Gastrocnemius medialis (tissue), 4 donors: ENCODE measurements at regions of chrX and their contacts with region 1.

Region 1: DNA sequence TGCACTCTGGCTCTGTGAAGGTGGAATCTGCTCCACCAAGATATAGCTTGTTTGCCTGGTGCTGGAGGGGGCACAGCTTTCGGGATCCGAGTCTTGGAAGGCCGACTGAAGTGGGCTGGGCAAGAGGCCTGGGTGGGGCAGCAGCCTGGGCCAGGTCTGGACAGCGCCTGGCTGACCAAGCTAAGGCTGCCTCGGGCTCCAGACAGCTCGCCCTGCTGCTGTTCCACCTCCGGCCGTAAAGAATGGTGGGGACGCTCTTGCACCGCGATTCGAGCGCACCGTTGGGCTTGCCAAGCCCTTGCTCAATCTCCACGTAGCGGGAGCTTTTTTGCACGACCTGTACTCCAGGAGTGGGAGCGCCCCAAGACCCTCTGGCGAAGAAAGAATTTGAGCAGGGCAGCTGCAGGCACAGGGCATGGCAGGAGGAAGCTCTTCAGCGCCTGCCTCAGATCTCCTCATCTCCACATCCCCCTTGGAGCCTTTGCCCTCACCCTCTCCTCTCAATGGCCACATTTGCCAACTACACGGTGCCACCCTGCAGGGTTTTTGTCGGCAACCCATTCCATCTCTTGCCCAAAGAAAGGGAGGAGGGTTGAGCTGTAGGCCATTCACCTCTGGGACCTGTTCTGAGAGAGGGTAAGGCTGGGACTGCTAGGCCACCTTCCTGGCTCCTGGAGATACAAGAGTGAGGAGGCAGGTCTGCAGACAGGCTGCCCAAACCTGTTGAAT is 18.9 kb downstream of the CNGA2 start:
- DNase-seq: peak; percentile 4 to 19
- ATAC-seq: peak; percentile 58 to 72
- H3K4me3 ChIP-seq: no peak overlapping the region
- H3K27ac ChIP-seq: no peak overlapping the region
- H3K4me1 ChIP-seq: no peaks in the 10 kb centered on the region
- H3K27me3 ChIP-seq: no peaks in the 10 kb centered on the region
- CTCF ChIP-seq: peak; percentile 37 to 71 (median 59)
- POLR2A ChIP-seq: no peak

Region 2: GRCh38 chrX:151694661-151695582 is 58.6 kb before region 1 on chrX and contains the start of gene PRRG3:
- in situ Hi-C with region 1: no loop called
- intact Hi-C with region 1: no loop called
- DNase-seq: no peak
- ATAC-seq: no peak
- H3K4me3 ChIP-seq: peak within 1 kb of the TSS; percentile 5 to 40 (median 22)
- H3K27ac ChIP-seq: no peak within 1 kb of the TSS
- H3K4me1 ChIP-seq: no peaks in the 10 kb centered on the region
- H3K27me3 ChIP-seq: peaks cover 0 to 8% (median 0%) of the 10 kb centered on the region in 3 donors
- CTCF ChIP-seq: no peak
- POLR2A ChIP-seq: no peak
- total RNA-seq, gene PRRG3: 0.04 to 0.39 TPM in 2 of 4 donors, not detected in the others

Region 3: DNA sequence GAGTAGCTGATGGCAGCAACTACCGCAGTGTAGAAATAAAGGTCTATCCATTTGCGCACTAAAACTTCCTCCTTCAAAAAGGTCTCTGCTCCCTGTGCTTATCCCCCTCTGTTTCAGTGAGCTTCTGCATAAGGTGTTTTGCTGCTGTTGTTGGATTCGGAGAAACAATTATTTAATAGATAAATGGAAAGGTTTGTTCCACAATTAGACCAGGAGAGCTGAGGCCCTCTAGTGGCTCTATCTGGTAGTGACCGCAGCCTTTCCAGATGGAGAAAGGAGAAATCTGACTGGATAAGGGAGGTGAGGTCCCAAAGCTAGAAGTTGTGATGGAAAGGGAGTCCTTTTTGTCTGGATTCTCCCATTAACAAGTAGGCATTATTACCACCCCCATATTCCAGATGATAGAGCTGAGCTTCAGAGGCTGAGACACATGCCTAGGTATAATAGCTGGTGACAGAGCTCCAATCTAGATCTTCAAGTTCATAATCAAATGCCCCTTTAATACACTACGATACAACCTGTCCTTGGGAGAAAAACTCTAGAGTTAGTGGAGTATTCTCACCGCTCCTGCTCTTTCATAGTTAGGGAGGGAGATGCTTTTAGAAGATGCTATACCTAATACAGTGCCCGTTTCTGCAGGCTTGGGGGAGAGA is 879.1 kb after region 1 on chrX:
- in situ Hi-C with region 1: loop called (anchors 10 to 25 kb)
- intact Hi-C with region 1: loop called (anchors 5 kb)
- DNase-seq: no peak
- ATAC-seq: no peak
- H3K4me3 ChIP-seq: no peak overlapping the region
- H3K27ac ChIP-seq: no peak overlapping the region
- H3K4me1 ChIP-seq: no peaks in the 10 kb centered on the region
- H3K27me3 ChIP-seq: peaks cover 0 to 5% (median 0%) of the 10 kb centered on the region in 3 donors
- CTCF ChIP-seq: peak in 4 of 5 experiments; percentile 37 to 60 (median 44)
- POLR2A ChIP-seq: no peak

Region 4: DNA sequence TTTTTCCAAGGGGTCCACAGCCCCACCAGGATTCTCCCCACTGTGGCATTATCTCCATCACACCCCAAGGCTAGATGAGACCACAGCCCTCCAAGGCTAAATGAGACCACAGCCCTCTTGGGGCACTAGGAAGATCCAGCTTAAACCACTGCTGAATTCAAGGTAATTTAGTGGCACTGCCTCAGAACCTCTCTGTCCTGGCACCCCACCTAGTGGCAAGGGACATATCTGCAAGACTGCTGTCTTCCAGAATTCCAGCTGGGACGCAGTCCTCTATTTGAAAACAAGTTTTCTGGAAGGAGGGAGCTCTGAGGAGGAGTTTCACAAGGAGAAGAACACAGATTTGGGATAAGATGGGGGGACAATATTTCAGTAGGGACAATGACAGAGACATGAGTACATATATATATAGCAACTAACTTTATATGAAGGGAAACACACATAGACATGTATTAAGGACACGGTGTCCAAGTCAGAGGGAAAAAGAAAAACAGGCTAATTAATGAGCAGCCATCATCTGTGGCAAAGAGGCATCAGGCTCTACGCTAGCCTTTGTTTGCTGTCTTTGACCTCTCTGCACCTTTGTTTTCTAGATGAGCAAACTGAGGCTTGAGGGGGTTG is 1067.8 kb after region 1 on chrX:
- in situ Hi-C with region 1: loop called in 1 of 4 experiments (anchors 25 kb)
- intact Hi-C with region 1: loop called (anchors 10 kb)
- DNase-seq: no peak
- ATAC-seq: no peak
- H3K4me3 ChIP-seq: no peak overlapping the region
- H3K27ac ChIP-seq: no peak overlapping the region
- H3K4me1 ChIP-seq: no peaks in the 10 kb centered on the region
- H3K27me3 ChIP-seq: no peaks in the 10 kb centered on the region
- CTCF ChIP-seq: peak in 2 of 5 experiments; percentile 29 to 50
- POLR2A ChIP-seq: no peak